ENCODE measurements at regions of chr1 and their contacts with region 1.

Region 1: GRCh38 chr1:39973503-39974135 is 18.7 kb downstream of the MFSD2A start:
- DNase-seq: peak; percentile 70 to 78
- H3K4me3 ChIP-seq: no peak overlapping the region
- H3K27ac ChIP-seq: no peak overlapping the region
- H3K4me1 ChIP-seq: no peaks in the 10 kb centered on the region
- H3K27me3 ChIP-seq: peaks cover 0 to 4% of the 10 kb centered on the region in 2 donors
- CTCF ChIP-seq: peak; percentile 94 to 96

Region 2: DNA sequence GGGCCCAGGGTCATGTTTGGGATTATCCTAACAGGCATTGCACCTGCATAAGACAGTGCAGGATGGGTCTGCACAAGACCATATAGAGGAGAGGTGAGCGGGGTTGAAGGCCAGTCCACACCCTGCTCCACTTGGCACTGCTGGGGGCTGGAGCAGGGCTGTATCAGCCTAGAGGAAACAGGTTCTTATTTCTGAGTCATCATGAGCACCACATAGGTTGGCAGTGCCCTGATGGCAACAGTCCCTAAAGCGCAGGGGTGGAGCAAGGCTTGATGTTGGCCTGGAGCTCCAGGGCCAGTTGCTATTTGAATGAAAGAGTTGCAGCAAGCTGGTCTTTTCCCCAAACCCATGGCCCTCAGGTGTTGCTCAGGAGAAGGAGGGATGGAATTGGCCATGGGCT is 155.1 kb before region 1 on chr1:
- intact Hi-C with region 1: loop called (anchors 2 kb)
- DNase-seq: no peak
- H3K4me3 ChIP-seq: no peak overlapping the region
- H3K27ac ChIP-seq: no peak overlapping the region
- H3K4me1 ChIP-seq: no peaks in the 10 kb centered on the region
- H3K27me3 ChIP-seq: peaks cover 0 to 36% of the 10 kb centered on the region in 2 donors
- CTCF ChIP-seq: no peak

Region 3: DNA sequence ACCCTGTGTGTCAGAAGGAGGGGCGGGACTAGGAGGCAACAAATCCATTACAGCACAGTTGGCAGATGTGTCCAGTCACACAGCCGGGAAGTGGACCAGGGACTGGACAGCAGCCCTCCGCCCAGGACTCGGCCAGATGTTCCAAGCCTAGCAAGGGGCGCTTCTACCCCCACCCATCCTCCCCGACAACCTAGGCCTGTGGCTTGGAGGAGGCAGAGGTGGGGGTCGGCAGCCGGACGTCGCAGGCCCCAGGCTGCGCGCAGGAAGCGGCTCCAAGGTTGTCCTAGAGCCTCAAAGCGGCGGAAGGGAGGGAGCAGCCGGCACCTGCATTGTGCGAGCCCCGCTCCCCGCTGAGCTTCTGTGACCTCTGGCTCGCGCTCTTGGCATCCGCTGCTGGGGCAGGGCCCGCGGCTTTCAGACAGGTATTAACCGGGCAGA is 51.3 kb before region 1 on chr1:
- intact Hi-C with region 1: loop called (anchors 1 kb)
- DNase-seq: no peak
- H3K4me3 ChIP-seq: no peak overlapping the region
- H3K27ac ChIP-seq: no peak overlapping the region
- H3K4me1 ChIP-seq: peaks cover 0 to 4% (median 0%) of the 10 kb centered on the region in 4 donors
- H3K27me3 ChIP-seq: peaks cover 0 to 26% of the 10 kb centered on the region in 2 donors
- CTCF ChIP-seq: no peak

Region 4: DNA sequence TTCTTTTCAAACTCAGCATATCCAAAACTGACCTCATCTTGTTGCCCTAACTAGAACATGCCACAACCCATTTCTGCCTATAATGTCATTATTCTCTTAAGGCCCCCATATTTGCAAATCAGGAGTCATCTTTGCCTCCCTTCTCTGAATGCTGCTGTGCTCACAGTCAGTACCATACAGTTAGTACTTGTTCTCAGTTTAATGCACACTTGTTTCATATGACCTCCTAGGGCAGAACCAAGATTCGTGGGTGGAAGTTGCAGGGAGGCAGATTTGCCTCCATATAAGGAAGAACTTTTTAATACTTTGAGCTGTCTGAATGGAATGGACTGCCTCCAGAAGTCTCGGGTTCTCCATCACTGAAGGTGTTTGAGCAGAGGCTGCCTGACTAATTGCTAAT is 76.1 kb after region 1 on chr1:
- intact Hi-C with region 1: no loop called
- DNase-seq: no peak
- H3K4me3 ChIP-seq: no peak overlapping the region
- H3K27ac ChIP-seq: peak overlapping the region; percentile 63 to 71
- H3K4me1 ChIP-seq: peaks cover 0 to 100% (median 60%) of the 10 kb centered on the region in 4 donors
- H3K27me3 ChIP-seq: no peaks in the 10 kb centered on the region
- CTCF ChIP-seq: no peak

Measured in tibial artery (tissue), 4 donors.